ENCODE measurements at regions of chr9 and their contacts with region 1.

Region 1: DNA sequence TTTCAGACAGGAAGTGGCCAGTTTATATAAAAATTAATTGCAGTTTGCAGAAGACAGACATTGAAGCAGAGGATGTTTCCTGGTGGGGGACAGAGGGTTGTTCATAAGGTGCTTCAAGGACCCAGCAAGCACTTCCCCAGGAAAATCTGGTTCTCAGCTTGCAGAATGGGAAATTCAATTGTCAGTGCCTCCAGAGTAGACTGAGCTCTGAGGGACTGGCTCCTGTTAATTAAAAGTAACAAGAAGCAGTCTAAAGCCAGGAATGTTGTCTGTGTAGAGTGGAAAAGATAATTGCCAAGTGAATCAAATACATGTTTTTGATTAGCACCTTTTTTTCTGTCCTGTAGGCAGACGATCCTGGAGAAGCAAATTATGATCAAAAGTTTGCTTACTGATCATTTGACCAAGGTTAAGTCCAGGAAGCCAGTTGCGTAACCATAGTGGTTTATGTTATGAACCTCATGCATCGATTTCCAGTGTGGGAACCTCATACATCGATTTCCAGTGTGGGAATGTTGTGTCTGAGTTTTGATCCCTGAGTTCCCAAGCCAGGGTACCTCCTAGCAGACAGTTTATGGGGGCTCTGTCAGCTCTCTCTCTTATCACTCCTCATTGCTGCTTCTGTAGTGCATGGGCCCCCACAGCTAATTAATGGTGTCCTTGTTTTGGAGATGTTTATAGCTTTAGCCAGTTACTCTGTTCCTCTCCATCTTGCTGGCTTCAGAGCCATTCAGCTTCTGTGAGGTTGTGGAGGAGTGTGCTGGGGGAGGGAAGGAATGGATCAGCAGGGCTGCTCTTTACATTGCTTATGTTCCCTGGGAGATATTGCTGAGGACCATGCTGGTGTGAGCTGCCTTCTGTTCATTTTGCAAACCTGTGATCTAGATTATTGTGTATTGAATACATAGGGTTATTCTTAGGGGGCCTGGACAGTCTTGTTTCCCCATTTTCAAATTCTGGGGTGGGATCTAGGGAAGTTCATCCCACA is 17.1 kb downstream of the MSANTD3 start:
- DNase-seq: no peak
- H3K4me3 ChIP-seq: no peak overlapping the region
- H3K27ac ChIP-seq: no peak overlapping the region
- H3K4me1 ChIP-seq: peaks cover 0 to 19% (median 0%) of the 10 kb centered on the region in 4 donors
- H3K27me3 ChIP-seq: no peaks in the 10 kb centered on the region
- CTCF ChIP-seq: no peak
- EP300 ChIP-seq: no peak
- POLR2A ChIP-seq: no peak

Region 2: DNA sequence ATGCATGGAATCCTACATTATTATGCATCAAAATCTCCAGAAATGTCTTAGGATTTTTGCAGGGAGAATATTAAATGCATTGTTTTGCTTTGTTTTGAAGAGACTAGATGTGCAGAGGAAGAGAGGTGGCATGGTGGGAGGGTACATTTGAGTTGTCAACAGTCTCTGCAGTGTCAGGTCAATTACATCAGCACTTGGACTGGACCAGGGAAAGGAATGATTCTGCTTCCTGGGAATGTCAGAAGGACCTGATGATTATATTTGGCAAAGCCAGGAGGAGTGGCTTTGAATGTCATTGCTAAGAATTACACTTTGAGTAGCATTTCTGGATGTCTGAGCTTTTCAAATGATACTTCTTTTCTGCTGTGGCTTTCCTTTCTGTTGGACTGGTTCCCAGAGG is 11.4 kb after region 1 on chr9:
- in situ Hi-C with region 1: no loop called
- intact Hi-C with region 1: loop called (anchors 2 kb)
- DNase-seq: no peak
- H3K4me3 ChIP-seq: no peak overlapping the region
- H3K27ac ChIP-seq: no peak overlapping the region
- H3K4me1 ChIP-seq: no peaks in the 10 kb centered on the region
- H3K27me3 ChIP-seq: no peaks in the 10 kb centered on the region
- CTCF ChIP-seq: no peak
- EP300 ChIP-seq: no peak
- POLR2A ChIP-seq: no peak

Region 3: DNA sequence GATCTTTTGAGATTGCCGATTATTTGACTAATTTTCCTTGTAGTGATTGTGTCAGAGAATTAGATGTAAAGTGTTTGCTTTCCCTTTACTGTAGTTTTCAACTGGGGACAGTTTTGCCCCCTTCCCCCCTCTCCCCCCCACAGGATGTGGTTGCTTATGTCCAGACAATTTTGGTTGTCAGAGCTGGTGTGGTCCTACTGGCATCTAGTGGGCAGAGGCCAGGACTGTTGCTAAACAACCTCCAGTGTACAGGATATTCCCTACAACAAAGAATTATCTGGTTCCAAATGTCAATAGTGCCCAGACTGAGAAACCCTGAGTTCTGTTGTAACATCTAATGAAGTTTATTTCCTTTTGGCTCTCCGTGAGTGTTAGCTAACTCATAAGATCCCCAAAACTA is 48.9 kb after region 1 on chr9:
- in situ Hi-C with region 1: no loop called
- intact Hi-C with region 1: no loop called
- DNase-seq: no peak
- H3K4me3 ChIP-seq: no peak overlapping the region
- H3K27ac ChIP-seq: no peak overlapping the region
- H3K4me1 ChIP-seq: no peaks in the 10 kb centered on the region
- H3K27me3 ChIP-seq: no peaks in the 10 kb centered on the region
- CTCF ChIP-seq: no peak
- EP300 ChIP-seq: no peak
- POLR2A ChIP-seq: no peak

Region 4: GRCh38 chr9:100515578-100516494 is 71.8 kb after region 1 on chr9:
- in situ Hi-C with region 1: no loop called
- intact Hi-C with region 1: no loop called
- DNase-seq: no peak
- H3K4me3 ChIP-seq: no peak overlapping the region
- H3K27ac ChIP-seq: no peak overlapping the region
- H3K4me1 ChIP-seq: no peaks in the 10 kb centered on the region
- H3K27me3 ChIP-seq: no peaks in the 10 kb centered on the region
- CTCF ChIP-seq: no peak
- EP300 ChIP-seq: no peak
- POLR2A ChIP-seq: no peak

Region 5: GRCh38 chr9:100856238-100856637 is 412.2 kb after region 1 on chr9:
- in situ Hi-C with region 1: no loop called
- intact Hi-C with region 1: no loop called
- DNase-seq: no peak
- H3K4me3 ChIP-seq: no peak overlapping the region
- H3K27ac ChIP-seq: no peak overlapping the region
- H3K4me1 ChIP-seq: no peaks in the 10 kb centered on the region
- H3K27me3 ChIP-seq: no peaks in the 10 kb centered on the region
- CTCF ChIP-seq: no peak
- EP300 ChIP-seq: no peak
- POLR2A ChIP-seq: no peak